ENCODE measurements at regions of chr5 and their contacts with region 1.

Region 1: DNA sequence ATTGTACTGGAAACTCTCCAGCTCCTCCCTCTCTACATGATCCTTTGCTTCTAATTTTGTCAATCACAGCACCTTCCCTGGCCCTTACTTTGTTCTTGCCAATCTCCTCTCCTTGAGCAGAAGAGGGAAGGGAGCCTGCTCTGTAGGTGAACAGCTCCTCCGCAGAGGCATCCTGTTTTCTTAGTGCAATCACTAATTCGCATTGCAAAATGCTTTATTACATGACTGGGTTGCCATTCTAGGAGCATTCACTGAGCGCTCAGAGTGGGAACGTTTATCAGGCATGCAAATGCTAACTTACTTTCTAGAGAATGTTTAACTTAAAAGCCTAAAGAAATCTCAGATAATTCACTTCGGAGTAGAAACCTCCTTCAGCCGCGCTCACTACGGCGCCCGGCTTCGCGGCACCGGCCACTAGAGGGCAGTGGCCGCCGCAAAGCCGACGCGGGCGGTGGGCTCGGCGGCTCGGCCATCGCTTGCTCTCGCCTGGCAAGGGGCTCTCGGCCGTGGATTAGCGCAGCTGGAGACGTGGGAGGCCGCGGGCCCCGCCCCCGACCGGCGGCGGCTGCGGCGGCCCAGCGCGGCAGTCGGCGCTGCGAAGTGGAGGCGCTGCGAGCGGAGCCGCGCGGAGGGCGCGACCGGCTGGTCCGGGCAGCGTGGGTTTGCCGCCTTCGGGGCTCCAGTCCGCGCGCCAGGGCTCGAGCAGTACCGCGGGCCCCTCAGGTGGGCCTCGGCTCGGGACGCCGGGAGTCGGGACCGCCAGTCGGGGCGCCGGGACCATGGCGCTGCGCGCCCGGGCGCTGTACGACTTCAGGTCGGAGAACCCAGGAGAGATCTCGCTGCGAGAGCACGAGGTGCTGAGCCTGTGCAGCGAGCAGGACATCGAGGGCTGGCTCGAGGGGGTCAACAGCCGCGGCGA is at the start of gene SNX18:
- DNase-seq: peak; percentile 89
- H3K4me3 Mint-ChIP-seq: peak within 1 kb of the TSS; percentile 82
- H3K27ac Mint-ChIP-seq: no peak within 1 kb of the TSS
- H3K4me1 Mint-ChIP-seq: peaks cover 31% of the 10 kb centered on the region
- H3K27me3 Mint-ChIP-seq: peaks cover 22% of the 10 kb centered on the region
- total RNA-seq, gene SNX18: 13.3 and 13.4 TPM in 2 replicates

Region 2: DNA sequence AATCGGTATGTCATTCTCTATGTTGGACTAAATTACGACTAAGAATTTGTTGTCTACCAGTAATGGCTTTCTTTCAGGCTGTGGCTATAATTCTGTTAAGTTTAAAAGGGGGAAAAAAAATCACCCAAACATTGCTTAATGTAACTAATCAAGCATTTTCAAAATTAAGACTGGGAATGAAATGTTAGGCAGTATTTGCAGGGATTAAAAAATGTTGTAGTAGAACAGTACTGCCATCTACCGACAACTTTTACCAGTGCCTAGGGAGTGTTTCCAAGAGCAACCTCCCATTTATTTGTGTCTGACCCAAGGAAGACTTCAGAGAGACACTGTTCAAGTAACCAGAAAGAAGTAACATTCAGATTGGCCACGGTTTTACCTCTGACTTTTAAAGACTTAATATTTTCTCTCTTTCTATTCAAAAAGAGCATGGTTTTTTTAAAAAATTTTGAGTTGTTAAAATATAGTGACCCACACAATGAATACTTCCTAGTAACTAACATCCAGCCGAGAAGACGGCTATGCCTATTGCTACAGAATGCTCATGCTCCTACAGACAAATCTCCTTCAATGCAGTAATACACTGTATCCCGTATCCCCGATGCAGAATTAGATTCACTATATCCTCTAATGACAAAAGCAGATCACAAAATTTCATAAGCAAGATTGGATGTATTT is 299.5 kb before region 1 on chr5:
- intact Hi-C with region 1: no loop called
- DNase-seq: no peak
- H3K4me3 Mint-ChIP-seq: no peak overlapping the region
- H3K27ac Mint-ChIP-seq: no peak overlapping the region
- H3K4me1 Mint-ChIP-seq: no peaks in the 10 kb centered on the region
- H3K27me3 Mint-ChIP-seq: no peaks in the 10 kb centered on the region

Region 3: DNA sequence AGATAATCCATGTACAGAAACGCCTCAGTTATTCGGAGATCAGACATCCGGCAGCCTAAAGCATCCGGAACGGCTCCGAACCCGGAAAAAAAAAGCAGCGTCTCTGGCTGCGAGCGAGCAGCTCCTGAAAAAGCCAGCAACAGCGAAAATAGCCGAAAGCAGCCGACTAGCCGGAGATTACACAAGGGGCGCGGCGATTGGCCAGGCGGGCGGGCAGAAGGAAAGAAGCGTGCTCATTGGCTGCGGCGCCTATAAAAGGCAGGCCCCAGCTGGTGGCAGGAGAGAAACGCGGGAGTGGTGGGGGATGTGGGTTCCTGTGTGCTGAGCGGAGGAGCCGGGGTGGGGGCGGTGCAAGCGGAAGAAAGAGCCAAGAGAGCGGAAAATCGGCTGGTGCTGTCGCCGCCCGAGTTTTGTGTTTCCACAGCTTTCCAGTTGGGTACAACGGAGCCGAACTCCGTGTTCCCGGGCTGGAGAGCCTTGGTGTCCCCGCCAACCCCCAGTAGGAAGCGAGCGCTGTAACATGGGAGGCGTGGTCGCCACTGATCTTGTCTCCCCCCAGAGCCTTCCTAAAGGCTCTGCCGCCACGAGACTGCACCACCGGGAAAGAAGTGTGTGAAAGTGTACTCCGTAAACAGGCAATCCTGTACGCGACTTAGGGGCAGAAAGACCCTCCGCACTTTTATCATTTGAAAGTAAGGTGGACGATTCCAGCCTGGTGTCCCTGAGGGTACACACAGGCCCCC is 206.8 kb before region 1 on chr5 and contains the start of gene ARL15:
- intact Hi-C with region 1: loop called (anchors 2 kb)
- DNase-seq: peak; percentile 98
- H3K4me3 Mint-ChIP-seq: peak within 1 kb of the TSS; percentile 83
- H3K27ac Mint-ChIP-seq: peak within 1 kb of the TSS; percentile 73
- H3K4me1 Mint-ChIP-seq: peaks cover 21% of the 10 kb centered on the region
- H3K27me3 Mint-ChIP-seq: peaks cover 25% of the 10 kb centered on the region
- total RNA-seq, gene ARL15: 6.0 and 6.8 TPM in 2 replicates

Region 4: DNA sequence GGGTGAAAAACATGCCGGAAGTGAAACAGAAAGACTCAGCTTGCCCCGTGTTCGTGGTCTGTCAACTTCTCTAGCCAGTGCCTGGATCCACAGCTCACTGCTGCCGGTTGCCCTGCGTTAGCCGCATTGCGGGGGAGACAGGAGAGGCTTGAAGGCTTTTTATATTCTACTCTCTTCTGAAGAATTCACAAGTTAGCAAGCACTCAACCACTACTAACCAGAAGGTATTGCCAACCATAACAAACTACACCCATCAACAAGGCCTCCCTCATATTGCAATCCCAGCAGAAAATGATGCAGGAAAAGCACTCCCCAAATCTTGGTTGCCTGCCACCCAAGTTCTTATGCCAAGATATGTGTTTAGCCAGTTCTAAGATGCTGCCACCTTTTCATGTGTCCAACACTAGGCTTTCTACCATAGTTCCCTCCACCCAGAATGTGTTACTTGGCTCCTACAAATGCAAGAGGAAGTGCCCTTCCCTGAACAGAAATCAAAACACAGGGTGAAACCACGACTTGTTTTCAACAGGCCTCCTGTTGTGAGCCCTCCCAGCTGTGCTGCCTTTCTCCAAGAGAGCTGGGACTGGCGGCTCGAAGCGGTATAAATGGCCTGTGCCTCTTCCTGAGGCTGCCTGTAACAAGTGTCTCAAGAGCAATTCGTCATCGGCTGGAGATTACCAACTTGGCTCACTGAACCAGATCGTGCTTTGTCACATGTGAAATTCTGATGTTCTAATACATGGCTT is 129.1 kb after region 1 on chr5:
- intact Hi-C with region 1: loop called (anchors 2 kb)
- DNase-seq: peak; percentile 74
- H3K4me3 Mint-ChIP-seq: peak overlapping the region; percentile 46
- H3K27ac Mint-ChIP-seq: peak overlapping the region; percentile 86
- H3K4me1 Mint-ChIP-seq: peaks cover 50% of the 10 kb centered on the region
- H3K27me3 Mint-ChIP-seq: no peaks in the 10 kb centered on the region

Region 5: GRCh38 chr5:54743997-54744788 is 226.8 kb after region 1 on chr5:
- intact Hi-C with region 1: loop called (anchors 10 kb)
- DNase-seq: peak; percentile 58
- H3K4me3 Mint-ChIP-seq: no peak overlapping the region
- H3K27ac Mint-ChIP-seq: peak overlapping the region; percentile 59
- H3K4me1 Mint-ChIP-seq: peaks cover 26% of the 10 kb centered on the region
- H3K27me3 Mint-ChIP-seq: peaks cover 3% of the 10 kb centered on the region

Region 6: GRCh38 chr5:54844905-54845566 is 327.6 kb after region 1 on chr5:
- intact Hi-C with region 1: loop called (anchors 1 kb)
- DNase-seq: no peak
- H3K4me3 Mint-ChIP-seq: no peak overlapping the region
- H3K27ac Mint-ChIP-seq: no peak overlapping the region
- H3K4me1 Mint-ChIP-seq: peaks cover 15% of the 10 kb centered on the region
- H3K27me3 Mint-ChIP-seq: peaks cover 9% of the 10 kb centered on the region

Region 7: DNA sequence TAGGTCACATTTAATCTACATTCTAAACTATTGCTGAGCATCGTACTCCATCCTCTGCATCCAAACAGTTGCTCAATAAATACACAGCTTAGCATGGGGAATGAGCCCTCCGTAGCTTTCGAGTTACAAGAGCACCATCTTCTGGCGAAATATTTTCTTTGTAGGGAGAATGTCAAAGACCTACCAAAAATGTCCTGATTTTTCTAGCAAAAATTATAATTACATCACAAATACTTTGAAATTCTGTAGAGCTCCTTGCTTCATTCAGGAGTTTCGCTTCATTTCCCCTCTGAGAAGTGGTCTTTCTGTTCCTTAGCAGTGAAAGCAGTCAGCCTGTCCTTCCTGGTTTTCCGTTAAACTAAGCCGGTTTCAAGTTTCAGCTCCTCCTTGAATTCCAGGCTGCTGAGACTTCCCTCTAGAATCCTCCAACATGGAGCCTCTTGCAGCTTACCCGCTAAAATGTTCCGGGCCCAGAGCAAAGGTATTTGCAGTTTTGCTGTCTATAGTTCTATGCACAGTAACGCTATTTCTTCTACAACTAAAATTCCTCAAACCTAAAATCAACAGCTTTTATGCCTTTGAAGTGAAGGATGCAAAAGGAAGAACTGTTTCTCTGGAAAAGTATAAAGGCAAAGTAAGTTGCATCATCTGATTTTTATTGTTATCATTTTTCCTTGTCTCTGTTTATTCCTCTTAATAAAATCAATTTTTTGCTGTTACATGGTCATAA is 642.5 kb after region 1 on chr5 and contains the start of gene GPX8:
- intact Hi-C with region 1: loop called (anchors 1 kb)
- DNase-seq: no peak
- H3K4me3 Mint-ChIP-seq: no peak within 1 kb of the TSS
- H3K27ac Mint-ChIP-seq: no peak within 1 kb of the TSS
- H3K4me1 Mint-ChIP-seq: peaks cover 5% of the 10 kb centered on the region
- H3K27me3 Mint-ChIP-seq: peaks cover 56% of the 10 kb centered on the region
- total RNA-seq, gene GPX8: not detected in 2 replicates